Activated CD4-positive, alpha-beta T cell treated with anti-CD3 and anti-CD28 coated beads for 36 hours (primary cell): ENCODE measurements at regions of chr11 and their contacts with region 1.

Region 1: DNA sequence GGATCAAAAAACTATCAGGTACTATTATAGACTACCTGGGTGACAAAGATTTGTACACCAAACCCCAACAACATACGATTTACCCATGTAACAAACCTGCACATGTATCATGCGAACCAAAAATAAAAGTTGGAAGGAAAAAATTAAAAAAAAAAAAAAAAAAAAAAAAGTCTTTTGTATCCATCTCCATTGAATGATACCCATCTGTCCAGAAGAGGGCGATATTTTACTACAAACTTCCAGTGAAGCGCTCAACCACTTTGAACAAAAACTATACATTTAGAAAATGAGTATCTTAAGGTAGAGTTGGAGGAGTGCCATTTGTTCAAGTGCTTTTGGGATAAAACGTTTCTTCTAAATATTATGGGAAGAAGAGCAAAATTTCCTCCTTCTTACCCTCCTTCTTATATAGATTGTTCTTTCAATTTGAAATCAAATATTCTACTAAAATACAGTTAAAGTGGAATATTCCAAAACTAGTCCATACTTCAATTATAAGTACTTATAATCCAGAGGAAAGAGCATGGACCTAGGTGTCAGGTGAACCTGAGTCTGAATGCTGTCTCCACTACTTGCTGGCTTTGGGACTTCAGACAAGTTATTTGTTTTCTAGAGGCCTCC is 23.3 kb downstream of the ARL14EP start:
- DNase-seq: no peak
- ATAC-seq: peak; percentile 63
- H3K4me3 Mint-ChIP-seq: no peak overlapping the region
- H3K27ac Mint-ChIP-seq: no peak overlapping the region
- H3K4me1 Mint-ChIP-seq: peaks cover 5% of the 10 kb centered on the region
- H3K27me3 Mint-ChIP-seq: no peaks in the 10 kb centered on the region

Region 2: DNA sequence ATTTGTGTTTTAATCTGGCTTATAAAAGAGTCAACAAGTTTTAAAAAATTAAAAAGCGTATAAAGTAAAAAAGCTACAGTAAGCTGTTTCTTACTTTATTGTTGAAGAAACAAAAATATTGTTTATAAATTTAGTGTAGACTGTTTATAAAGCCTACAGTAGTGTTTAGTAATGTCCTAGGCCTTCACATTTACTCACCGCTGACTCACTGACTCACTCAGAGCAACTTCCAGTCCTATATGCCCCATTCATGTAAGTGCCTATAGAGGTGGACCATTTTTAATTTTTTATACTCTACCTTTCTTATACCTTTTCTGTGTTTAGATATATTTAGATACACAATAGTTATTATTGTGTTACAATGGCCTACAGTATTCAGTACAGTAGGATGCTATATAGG is 227.8 kb after region 1 on chr11:
- CTCF ChIA-PET with region 1: no interaction called
- POLR2A ChIA-PET with region 1: no interaction called
- intact Hi-C with region 1: no loop called
- DNase-seq: no peak
- ATAC-seq: no peak
- H3K4me3 Mint-ChIP-seq: no peak overlapping the region
- H3K27ac Mint-ChIP-seq: no peak overlapping the region
- H3K4me1 Mint-ChIP-seq: no peaks in the 10 kb centered on the region
- H3K27me3 Mint-ChIP-seq: peaks cover 1% of the 10 kb centered on the region

Region 3: DNA sequence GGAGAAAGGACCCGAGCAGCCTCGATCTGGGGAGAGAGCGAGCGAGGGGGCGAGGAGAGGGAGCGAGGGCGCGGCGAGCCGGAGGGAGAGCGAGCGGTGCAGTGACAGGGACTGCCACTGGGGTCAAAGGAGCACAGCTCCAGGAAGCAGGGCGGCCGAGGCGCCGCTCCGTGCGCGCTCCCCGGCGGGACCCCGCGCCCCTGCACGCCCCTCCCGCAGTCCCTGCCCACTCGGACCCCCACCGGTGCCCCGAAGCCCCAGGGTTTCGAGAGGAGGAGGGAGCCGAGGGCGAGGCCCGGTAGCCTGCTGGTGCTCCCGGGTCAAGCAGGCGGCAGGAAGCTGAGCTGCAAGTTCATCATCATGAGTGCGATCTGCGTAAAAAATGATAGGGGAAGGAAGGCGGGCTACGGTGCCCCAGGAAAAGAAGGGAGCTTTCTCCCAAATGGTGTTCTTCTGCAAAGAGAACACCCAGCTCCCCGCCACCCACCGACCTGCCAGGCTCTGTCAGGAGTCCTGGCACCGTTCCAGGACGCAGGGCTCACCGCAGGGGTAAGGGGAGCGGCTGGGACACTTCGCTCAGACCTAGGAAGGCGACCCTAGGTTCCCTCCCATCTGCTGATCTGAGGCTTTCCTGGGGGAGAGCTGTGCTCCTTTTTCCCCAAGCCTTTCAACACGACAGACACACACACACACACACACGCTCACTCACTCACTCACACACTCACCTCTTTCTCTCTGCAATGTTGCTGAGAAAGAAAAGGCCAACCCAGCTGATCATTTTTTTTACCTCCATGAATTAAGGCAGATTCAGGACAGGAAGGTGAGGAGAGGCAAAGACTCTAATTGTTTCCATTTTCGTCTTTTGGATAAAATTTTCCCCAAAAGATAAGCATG is 240.3 kb after region 1 on chr11 and contains the start of gene MPPED2:
- CTCF ChIA-PET with region 1: no interaction called
- POLR2A ChIA-PET with region 1: no interaction called
- intact Hi-C with region 1: loop called in 1 of 2 experiments (anchors 10 kb)
- DNase-seq: peak; percentile 65
- ATAC-seq: peak; percentile 87
- H3K4me3 Mint-ChIP-seq: peak within 1 kb of the TSS; percentile 36
- H3K27ac Mint-ChIP-seq: no peak within 1 kb of the TSS
- H3K4me1 Mint-ChIP-seq: peaks cover 9% of the 10 kb centered on the region
- H3K27me3 Mint-ChIP-seq: peaks cover 38% of the 10 kb centered on the region
- total RNA-seq, gene MPPED2: 0.30 to 0.54 TPM

Region 4: GRCh38 chr11:30653606-30654005 is 307.4 kb after region 1 on chr11:
- CTCF ChIA-PET with region 1: no interaction called
- POLR2A ChIA-PET with region 1: no interaction called
- intact Hi-C with region 1: loop called in 1 of 2 experiments (anchors 5 kb)
- DNase-seq: no peak
- ATAC-seq: no peak
- H3K4me3 Mint-ChIP-seq: no peak overlapping the region
- H3K27ac Mint-ChIP-seq: no peak overlapping the region
- H3K4me1 Mint-ChIP-seq: no peaks in the 10 kb centered on the region
- H3K27me3 Mint-ChIP-seq: no peaks in the 10 kb centered on the region

Region 5: GRCh38 chr11:30855383-30856006 is 509.3 kb after region 1 on chr11:
- CTCF ChIA-PET with region 1: no interaction called
- POLR2A ChIA-PET with region 1: no interaction called
- intact Hi-C with region 1: loop called in 1 of 2 experiments (anchors 2 kb)
- DNase-seq: no peak
- ATAC-seq: no peak
- H3K4me3 Mint-ChIP-seq: no peak overlapping the region
- H3K27ac Mint-ChIP-seq: no peak overlapping the region
- H3K4me1 Mint-ChIP-seq: no peaks in the 10 kb centered on the region
- H3K27me3 Mint-ChIP-seq: no peaks in the 10 kb centered on the region

Region 6: DNA sequence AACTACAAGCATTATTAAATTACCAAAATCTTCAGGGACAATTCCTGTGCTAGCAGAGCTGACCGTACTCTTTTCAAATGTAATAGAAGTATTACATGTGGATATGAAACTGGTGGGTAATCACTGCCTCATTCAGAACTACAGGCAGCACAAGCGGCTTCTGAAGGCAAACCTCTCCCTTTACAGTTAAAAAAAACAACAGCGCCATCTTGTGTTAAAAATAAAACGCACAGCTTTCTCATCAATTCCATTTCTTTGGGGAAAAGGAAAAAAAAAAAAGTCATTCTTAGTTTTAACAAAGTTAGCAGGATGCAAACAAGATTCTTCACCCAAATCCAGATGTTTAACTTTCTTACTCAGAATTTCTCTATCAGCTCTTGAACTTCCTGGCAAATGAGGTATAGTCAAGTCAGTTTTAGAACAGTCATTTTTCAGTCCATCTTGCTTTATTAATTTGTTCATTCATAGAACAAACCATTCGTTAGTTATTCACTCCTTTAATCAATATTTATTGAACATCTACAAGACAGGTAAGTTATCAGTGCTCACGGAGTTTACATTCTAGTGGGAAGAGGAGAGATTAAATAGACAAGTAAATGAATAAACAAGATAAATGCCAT is 571.8 kb after region 1 on chr11:
- CTCF ChIA-PET with region 1: interaction called, 3 read pairs
- POLR2A ChIA-PET with region 1: no interaction called
- intact Hi-C with region 1: loop called (anchors 1 kb)
- DNase-seq: peak; percentile 9
- ATAC-seq: peak; percentile 55
- H3K4me3 Mint-ChIP-seq: no peak overlapping the region
- H3K27ac Mint-ChIP-seq: no peak overlapping the region
- H3K4me1 Mint-ChIP-seq: no peaks in the 10 kb centered on the region
- H3K27me3 Mint-ChIP-seq: peaks cover 7% of the 10 kb centered on the region